ENCODE measurements at regions of chr2 and their contacts with region 1.

Region 1: DNA sequence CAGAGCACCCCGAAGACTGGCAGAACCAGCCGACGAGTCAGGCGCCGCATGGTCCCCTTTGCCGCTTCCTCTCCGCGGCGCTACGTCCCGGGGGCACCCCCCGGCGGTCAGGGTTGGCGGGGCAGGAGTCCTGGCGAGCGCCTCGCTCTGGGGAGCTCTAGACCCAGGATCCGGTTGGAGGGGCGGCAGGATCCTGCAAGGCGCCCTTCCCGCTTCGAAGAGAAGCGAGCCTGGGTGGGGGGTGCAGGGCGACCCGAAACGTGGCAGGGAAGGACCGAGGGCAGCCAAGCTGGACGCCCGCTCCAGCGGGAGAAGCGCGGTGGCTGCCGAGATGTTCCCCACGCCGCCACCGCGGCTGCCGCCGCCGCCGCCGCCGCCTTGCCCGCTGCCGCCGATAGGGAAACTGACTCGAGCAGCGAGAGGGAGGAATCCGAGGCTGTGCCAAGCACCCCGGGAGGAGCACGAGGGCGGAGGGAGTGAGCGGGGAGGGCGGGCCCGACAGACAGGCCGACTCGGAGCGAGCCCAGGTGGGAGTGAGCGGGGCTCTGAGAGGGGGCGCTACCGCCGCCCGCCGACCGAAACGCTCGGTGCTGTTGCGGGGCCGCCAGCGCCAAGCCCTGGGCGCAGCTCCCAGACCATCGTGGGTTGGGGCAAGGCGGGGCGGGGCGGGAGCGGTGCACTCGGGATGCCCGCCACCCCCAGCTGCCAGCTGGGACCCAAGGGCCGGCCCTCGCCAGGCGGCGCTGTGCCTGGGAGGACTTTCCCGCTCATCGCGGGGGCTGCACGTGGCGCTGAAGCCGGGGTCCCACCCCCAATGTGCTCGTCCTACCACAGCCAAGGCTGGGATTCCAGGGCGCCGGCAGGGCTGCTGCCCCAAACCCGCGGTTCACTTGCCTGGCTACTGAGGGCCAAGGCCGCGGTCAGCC is at the start of gene GALNT14:
- DNase-seq: peak; percentile 85 to 96
- ATAC-seq: peak; percentile 89 to 92
- H3K4me3 ChIP-seq: peak within 1 kb of the TSS; percentile 63
- H3K27ac ChIP-seq: peak within 1 kb of the TSS; percentile 79 to 88
- H3K4me1 ChIP-seq: peaks cover 11% of the 10 kb centered on the region
- CTCF ChIP-seq: peak; percentile 88
- EP300 ChIP-seq: no peak
- POLR2A ChIP-seq: no peak; the same call in none of the 2 replicates
- RAD21 ChIP-seq: peak; percentile 63 to 65
- polyA plus RNA-seq, gene GALNT14: 34.4 and 40.1 TPM in 2 replicates

Region 2: GRCh38 chr2:30410217-30410616 is 728.1 kb before region 1 on chr2:
- CTCF ChIA-PET with region 1: no interaction called
- POLR2A ChIA-PET with region 1: no interaction called
- DNase-seq: peak; percentile 53 to 83
- ATAC-seq: peak; percentile 71 to 73; a peak in 5 of 6 replicates
- H3K4me3 ChIP-seq: no peak overlapping the region
- H3K27ac ChIP-seq: peak overlapping the region; percentile 57 to 68
- H3K4me1 ChIP-seq: peaks cover 24% of the 10 kb centered on the region
- CTCF ChIP-seq: no peak
- EP300 ChIP-seq: no peak; a peak in 1 of 5 replicates
- POLR2A ChIP-seq: no peak
- RAD21 ChIP-seq: no peak

Region 3: GRCh38 chr2:30886080-30886479 is 252.2 kb before region 1 on chr2:
- CTCF ChIA-PET with region 1: interaction called, 11 read pairs
- POLR2A ChIA-PET with region 1: no interaction called
- DNase-seq: no peak
- ATAC-seq: peak in 1 of 2 experiments; percentile 34; a peak in 3 of 6 replicates
- H3K4me3 ChIP-seq: no peak overlapping the region
- H3K27ac ChIP-seq: no peak overlapping the region
- H3K4me1 ChIP-seq: peaks cover 3% of the 10 kb centered on the region; the same call in 1 of the 3 replicates
- CTCF ChIP-seq: no peak
- EP300 ChIP-seq: no peak
- POLR2A ChIP-seq: no peak
- RAD21 ChIP-seq: no peak

Region 4: GRCh38 chr2:31110998-31111397 is 27.3 kb before region 1 on chr2:
- CTCF ChIA-PET with region 1: interaction called, 13 read pairs
- POLR2A ChIA-PET with region 1: no interaction called
- DNase-seq: no peak
- ATAC-seq: no peak
- H3K4me3 ChIP-seq: no peak overlapping the region
- H3K27ac ChIP-seq: no peak overlapping the region
- H3K4me1 ChIP-seq: no peaks in the 10 kb centered on the region
- CTCF ChIP-seq: no peak
- EP300 ChIP-seq: no peak
- POLR2A ChIP-seq: no peak
- RAD21 ChIP-seq: no peak

Region 5: DNA sequence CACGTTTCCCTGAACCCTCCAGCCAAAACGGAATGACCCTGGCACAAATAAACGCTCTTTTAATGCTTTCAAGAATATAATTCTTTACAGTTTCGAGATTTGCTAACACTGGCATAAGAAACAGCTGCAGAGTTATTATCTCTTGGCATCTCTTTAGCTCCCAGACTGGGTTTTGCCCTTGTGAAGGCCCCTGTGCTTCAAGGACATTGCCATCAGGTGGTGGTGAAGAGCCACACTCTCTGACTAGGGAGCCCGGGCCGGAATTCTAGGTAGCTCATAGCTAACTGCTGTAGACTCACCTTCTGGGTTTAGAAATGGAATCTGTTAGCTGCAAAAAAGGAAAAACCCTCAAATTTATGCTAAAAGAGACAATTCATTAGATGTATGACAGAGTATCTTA is 13.2 kb after region 1 on chr2:
- CTCF ChIA-PET with region 1: interaction called, 79 read pairs
- POLR2A ChIA-PET with region 1: interaction called, 5 read pairs
- DNase-seq: peak in 1 of 2 experiments; percentile 26
- ATAC-seq: peak; percentile 72 to 76; a peak in 5 of 6 replicates
- H3K4me3 ChIP-seq: no peak overlapping the region
- H3K27ac ChIP-seq: no peak overlapping the region
- H3K4me1 ChIP-seq: peaks cover 8% of the 10 kb centered on the region; the same call in 2 of the 3 replicates
- CTCF ChIP-seq: peak; percentile 20; the same call in 1 of the 3 replicates
- EP300 ChIP-seq: no peak
- POLR2A ChIP-seq: no peak
- RAD21 ChIP-seq: peak; percentile 29 to 35; a peak in 4 of 5 replicates

Region 6: DNA sequence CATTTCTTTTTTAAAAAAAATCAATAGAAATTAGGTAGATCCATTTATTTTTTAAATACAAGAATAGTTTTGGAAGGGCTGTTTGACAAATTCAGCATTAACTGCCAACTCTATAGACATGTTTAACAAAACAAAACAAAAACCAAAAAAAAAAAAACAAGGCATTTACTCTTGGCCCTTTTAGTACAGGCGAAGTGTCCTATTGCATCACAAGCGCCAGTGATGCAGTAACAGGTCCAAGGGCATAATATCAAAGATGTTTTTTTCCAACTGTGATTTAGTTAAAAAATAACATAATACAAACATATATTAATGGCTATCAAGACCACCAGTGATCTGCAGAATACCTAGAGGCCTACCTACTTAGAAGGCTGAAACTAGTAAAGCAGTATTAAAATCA is 220.9 kb after region 1 on chr2:
- CTCF ChIA-PET with region 1: no interaction called
- POLR2A ChIA-PET with region 1: no interaction called
- DNase-seq: no peak
- ATAC-seq: no peak
- H3K4me3 ChIP-seq: no peak overlapping the region
- H3K27ac ChIP-seq: no peak overlapping the region
- H3K4me1 ChIP-seq: 0 out of 3 replicates have a peak, but pooled peaks cover 9% of the 10 kb centered on the region
- CTCF ChIP-seq: no peak
- EP300 ChIP-seq: no peak
- POLR2A ChIP-seq: no peak
- RAD21 ChIP-seq: no peak